Activated T-helper 2 cell treated with anti-CD3 and anti-CD28 coated beads, Interferon-gamma antibody, Interleukin-2, Interleukin-4, amounts not matched to agents 10 μg/mL and 5 μg/mL and 100 μg/mL, durations not matched to agents 14 hours and 24 hours and 36 hours (primary cell): ENCODE measurements at regions of chr9 and their contacts with region 1.

Region 1: GRCh38 chr9:94726495-94727191 is at the start of gene AOPEP:
- DNase-seq: peak; percentile 98
- H3K4me3 Mint-ChIP-seq: peak within 1 kb of the TSS; percentile 91
- H3K27ac Mint-ChIP-seq: peak within 1 kb of the TSS; percentile 94
- H3K4me1 Mint-ChIP-seq: peaks cover 15% of the 10 kb centered on the region
- H3K27me3 Mint-ChIP-seq: no peaks in the 10 kb centered on the region
- total RNA-seq, gene AOPEP: 24.6 and 27.6 TPM in 2 replicates

Region 2: DNA sequence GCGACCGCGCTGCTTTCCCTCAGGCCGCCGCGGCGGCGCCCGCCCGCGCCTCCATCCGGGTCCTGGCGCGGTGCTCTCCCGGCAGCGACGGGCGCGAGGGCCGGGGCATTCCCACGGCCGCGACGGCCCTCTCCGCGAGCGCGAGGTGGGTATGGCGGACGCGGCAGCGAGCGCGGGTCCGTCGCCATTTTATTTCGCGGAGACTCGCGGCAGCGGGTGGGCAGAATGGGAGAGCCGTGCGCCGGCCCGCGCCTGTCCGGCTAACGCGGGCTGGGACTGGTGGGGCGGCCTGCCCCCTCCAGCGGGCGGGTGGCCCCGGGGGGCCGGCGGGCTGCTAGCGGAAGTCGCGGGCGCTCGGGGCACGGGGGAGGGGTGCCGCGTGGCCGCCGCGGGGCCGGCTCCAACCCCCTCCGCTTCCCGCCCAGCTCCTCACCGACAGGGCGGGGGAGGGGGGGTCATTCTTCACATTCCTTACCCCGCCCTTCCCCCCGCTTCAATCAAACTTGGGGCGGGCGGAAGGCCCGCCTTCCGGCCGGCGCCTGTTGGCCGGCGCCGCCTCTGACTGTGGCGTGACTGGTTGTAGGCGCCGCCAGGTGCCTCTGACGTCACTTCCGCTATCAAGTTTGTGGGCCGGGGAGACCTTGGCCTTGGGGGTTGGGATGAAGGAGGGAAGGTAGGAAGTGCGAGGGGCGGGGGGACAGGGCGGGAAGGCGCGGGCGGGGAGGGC is 560.2 kb before region 1 on chr9:
- intact Hi-C with region 1: loop called (anchors 2 kb)
- DNase-seq: peak; percentile 91
- H3K4me3 Mint-ChIP-seq: peak overlapping the region; percentile 88
- H3K27ac Mint-ChIP-seq: peak overlapping the region; percentile 84
- H3K4me1 Mint-ChIP-seq: peaks cover 44% of the 10 kb centered on the region
- H3K27me3 Mint-ChIP-seq: no peaks in the 10 kb centered on the region

Region 3: GRCh38 chr9:94672811-94673487 is 53.7 kb before region 1 on chr9:
- intact Hi-C with region 1: loop called (anchors 1 kb)
- DNase-seq: no peak
- H3K4me3 Mint-ChIP-seq: no peak overlapping the region
- H3K27ac Mint-ChIP-seq: no peak overlapping the region
- H3K4me1 Mint-ChIP-seq: peaks cover 11% of the 10 kb centered on the region
- H3K27me3 Mint-ChIP-seq: peaks cover 42% of the 10 kb centered on the region

Region 4: GRCh38 chr9:94952565-94953373 is 226.1 kb after region 1 on chr9:
- intact Hi-C with region 1: loop called (anchors 5 kb)
- DNase-seq: no peak
- H3K4me3 Mint-ChIP-seq: no peak overlapping the region
- H3K27ac Mint-ChIP-seq: no peak overlapping the region
- H3K4me1 Mint-ChIP-seq: peaks cover 31% of the 10 kb centered on the region
- H3K27me3 Mint-ChIP-seq: no peaks in the 10 kb centered on the region

Region 5: DNA sequence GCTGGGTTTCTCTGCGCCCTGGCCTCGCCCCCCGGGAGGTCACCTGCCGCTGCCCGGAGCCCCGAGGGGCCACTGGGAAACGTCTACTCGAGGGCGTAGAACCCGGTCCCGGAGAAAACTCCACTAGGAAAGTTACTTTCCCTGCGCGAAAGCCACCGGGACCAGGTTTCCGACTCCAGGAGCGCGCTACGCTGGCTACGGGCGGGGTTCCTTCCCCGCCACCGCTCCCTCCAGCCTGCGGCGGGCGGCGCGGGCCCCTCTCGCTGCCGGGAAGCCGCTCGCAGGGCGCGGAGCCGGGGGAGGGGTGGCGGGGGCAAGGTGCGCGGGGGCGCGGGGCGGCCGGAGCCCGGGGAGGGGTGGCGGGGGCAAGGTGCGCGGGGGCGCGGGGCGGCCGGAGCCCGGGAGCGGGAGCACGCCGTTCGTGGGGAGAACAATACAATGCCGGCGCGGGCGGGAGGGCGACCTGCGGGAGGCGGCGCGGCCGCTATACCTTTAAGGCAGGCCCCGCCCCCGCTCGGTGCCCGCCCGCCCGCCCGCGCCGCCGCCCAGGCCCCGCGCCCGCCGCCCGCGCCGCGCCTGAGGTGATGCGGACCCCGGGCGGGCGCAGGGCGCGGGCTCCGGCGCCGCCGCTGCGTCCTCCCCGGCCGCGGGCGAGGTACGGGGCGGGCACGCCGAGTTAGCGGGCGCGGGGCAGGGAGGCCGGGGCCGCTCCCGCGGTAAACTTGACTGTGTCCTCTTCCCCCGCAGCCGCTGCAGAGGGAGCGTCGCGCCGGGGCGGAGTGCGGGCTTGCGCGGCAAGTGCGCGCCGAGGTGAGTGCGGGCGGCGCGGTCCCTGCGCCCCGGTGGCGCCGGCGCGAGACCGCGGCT is 278.0 kb after region 1 on chr9:
- intact Hi-C with region 1: loop called (anchors 1 kb)
- DNase-seq: peak; percentile 36
- H3K4me3 Mint-ChIP-seq: peak overlapping the region; percentile 82
- H3K27ac Mint-ChIP-seq: no peak overlapping the region
- H3K4me1 Mint-ChIP-seq: peaks cover 36% of the 10 kb centered on the region
- H3K27me3 Mint-ChIP-seq: peaks cover 29% of the 10 kb centered on the region

Region 6: GRCh38 chr9:95127249-95128176 is 400.9 kb after region 1 on chr9:
- intact Hi-C with region 1: loop called (anchors 1 kb)
- DNase-seq: peak; percentile 52
- H3K4me3 Mint-ChIP-seq: no peak overlapping the region
- H3K27ac Mint-ChIP-seq: no peak overlapping the region
- H3K4me1 Mint-ChIP-seq: peaks cover 7% of the 10 kb centered on the region
- H3K27me3 Mint-ChIP-seq: no peaks in the 10 kb centered on the region

Region 7: DNA sequence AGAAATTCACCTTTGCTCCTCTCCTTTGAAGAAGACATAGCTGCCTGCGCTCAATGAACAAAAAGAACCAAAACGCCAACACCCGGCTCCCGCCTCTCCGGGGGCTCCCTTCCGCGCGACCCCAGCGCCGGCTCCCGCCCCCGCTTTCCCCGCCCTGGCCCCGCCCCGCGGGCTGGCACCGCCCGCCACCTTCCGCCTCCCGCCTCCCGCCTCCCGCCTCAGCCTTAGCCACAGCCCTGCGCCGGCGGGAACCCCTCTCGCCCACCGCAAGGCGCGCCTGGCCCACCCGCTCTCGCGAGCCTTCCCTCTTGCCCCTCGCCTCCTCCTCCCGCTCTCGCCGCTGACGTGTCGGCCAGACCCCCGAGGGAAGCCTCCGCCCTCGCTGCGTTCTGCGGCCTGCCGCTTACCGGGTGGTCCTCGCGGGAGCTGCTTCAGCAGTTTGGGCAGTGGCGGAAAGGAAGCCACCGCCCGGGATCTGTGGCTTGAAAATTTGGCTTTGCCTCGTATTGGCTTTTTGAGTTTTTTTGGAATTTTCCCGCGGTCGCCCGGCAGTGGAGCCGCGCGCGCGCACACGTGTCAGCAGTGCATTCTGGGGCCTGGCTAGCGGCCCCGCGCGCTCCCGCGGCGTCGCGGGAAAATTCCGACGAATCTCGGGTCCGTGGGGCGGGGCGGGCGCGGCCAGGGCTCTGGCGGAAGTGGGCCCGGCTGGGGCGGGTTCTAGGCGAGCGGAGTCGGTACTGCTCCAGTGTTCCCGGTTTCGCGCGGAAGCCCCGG is 590.7 kb after region 1 on chr9 and contains the start of gene FANCC:
- intact Hi-C with region 1: loop called (anchors 2 kb)
- DNase-seq: peak; percentile 78
- H3K4me3 Mint-ChIP-seq: peak within 1 kb of the TSS; percentile 90
- H3K27ac Mint-ChIP-seq: peak within 1 kb of the TSS; percentile 95
- H3K4me1 Mint-ChIP-seq: peaks cover 27% of the 10 kb centered on the region
- H3K27me3 Mint-ChIP-seq: peaks cover 10% of the 10 kb centered on the region
- total RNA-seq, gene FANCC: 12.6 and 16.8 TPM in 2 replicates